HCT116 (cell line): ENCODE measurements at regions of chr17 and their contacts with region 1.

Region 1: GRCh38 chr17:60142872-60143499 is 6.8 kb upstream of the CA4 start:
- DNase-seq: peak; percentile 82
- ATAC-seq: peak; percentile 88
- H3K4me3 ChIP-seq: peak overlapping the region; percentile 15 to 26
- H3K27ac ChIP-seq: no peak overlapping the region
- H3K4me1 ChIP-seq: peaks cover 18 to 26% of the 10 kb centered on the region in 2 experiments
- H3K27me3 ChIP-seq: no peaks in the 10 kb centered on the region
- CTCF ChIP-seq: peak; percentile 91 to 96 (median 93)
- POLR2A ChIP-seq: no peak
- RAD21 ChIP-seq: peak; percentile 96

Region 2: GRCh38 chr17:60269417-60269816 is 126.4 kb after region 1 on chr17:
- CTCF ChIA-PET with region 1: no interaction called
- POLR2A ChIA-PET with region 1: no interaction called
- RAD21 ChIA-PET with region 1: no interaction called
- intact Hi-C with region 1: no loop called
- DNase-seq: no peak
- ATAC-seq: no peak
- H3K4me3 ChIP-seq: no peak overlapping the region
- H3K27ac ChIP-seq: no peak overlapping the region
- H3K4me1 ChIP-seq: peaks cover 0 to 5% of the 10 kb centered on the region in 2 experiments; a peak in 1 of 4 replicates
- H3K27me3 ChIP-seq: no peaks in the 10 kb centered on the region
- CTCF ChIP-seq: no peak
- POLR2A ChIP-seq: no peak
- RAD21 ChIP-seq: no peak

Region 3: DNA sequence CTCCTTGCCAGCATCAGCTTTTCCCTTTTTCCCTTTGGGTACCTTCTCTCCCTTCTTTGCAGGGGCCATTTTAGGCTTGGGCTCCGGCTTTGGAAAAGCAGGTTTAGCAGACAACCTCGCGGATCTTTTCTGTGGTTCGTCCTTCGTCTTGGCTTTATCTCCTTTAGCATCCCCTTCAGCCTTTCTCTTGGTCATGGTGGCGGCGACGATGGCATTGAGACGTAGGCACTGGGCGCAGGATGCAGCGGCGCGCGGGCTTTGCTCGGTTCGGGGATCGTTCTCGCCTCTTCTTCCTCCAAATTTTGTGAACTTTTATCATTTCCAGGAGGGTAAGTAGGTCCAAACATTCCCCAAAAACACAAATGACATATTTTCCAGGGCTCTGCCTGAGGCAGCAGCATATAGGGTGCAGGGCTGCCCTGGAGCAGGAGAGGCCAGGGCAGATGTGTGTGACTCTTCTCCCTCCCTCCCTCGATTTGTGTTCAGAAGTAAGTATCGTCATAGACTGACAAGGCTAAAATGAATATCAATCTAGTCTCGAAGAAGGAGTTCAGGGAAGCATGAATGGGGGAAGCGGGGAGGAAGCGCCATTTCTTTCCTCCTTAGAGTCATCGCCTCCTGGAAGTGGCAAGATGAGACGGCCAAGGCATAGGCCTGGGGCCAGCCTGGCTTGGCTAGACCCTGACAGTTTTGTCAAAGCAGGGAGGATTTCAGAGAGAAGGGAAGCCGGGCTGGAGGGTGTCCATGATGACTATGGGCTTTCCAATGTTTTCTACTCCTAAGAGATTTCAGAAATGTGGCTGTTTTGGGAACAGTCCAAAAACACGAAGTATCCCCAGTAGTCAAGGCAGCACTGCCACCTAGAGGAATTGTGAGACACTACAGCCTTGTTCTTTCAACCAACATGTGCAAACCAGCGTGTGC is 292.5 kb after region 1 on chr17:
- CTCF ChIA-PET with region 1: no interaction called
- POLR2A ChIA-PET with region 1: no interaction called
- RAD21 ChIA-PET with region 1: no interaction called
- intact Hi-C with region 1: loop called (anchors 1 kb)
- DNase-seq: peak; percentile 79
- ATAC-seq: peak; percentile 87
- H3K4me3 ChIP-seq: no peak overlapping the region
- H3K27ac ChIP-seq: no peak overlapping the region
- H3K4me1 ChIP-seq: peaks cover 0 to 5% of the 10 kb centered on the region in 2 experiments; a peak in 2 of 4 replicates
- H3K27me3 ChIP-seq: no peaks in the 10 kb centered on the region
- CTCF ChIP-seq: peak; percentile 95 to 99 (median 97)
- POLR2A ChIP-seq: no peak
- RAD21 ChIP-seq: peak; percentile 100

Region 4: DNA sequence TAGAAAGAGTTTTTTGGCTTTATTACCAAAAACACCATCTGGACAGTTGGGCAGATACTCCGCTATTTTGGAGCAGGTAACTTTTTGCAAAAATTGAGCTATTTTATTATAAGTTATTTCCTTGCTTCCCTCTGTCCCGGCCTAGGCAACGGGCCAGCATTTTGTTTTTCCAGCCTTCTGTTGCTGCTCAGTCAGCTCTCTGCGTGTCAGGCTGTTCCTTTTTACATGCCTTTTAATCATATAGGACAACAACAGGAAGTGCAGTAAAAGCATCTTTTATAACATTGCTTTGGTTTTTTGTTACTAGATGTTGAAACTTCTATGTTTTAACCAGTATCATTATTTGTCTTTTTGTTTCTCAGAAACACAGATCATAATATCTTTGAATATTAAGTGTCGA is 487.4 kb after region 1 on chr17:
- CTCF ChIA-PET with region 1: no interaction called
- POLR2A ChIA-PET with region 1: no interaction called
- RAD21 ChIA-PET with region 1: no interaction called
- intact Hi-C with region 1: loop called (anchors 10 kb)
- DNase-seq: no peak
- ATAC-seq: no peak
- H3K4me3 ChIP-seq: no peak overlapping the region
- H3K27ac ChIP-seq: no peak overlapping the region
- H3K4me1 ChIP-seq: no peaks in the 10 kb centered on the region
- H3K27me3 ChIP-seq: no peaks in the 10 kb centered on the region
- CTCF ChIP-seq: no peak
- POLR2A ChIP-seq: no peak
- RAD21 ChIP-seq: no peak